ENCODE measurements at regions of chr20 and their contacts with region 1.

Region 1: DNA sequence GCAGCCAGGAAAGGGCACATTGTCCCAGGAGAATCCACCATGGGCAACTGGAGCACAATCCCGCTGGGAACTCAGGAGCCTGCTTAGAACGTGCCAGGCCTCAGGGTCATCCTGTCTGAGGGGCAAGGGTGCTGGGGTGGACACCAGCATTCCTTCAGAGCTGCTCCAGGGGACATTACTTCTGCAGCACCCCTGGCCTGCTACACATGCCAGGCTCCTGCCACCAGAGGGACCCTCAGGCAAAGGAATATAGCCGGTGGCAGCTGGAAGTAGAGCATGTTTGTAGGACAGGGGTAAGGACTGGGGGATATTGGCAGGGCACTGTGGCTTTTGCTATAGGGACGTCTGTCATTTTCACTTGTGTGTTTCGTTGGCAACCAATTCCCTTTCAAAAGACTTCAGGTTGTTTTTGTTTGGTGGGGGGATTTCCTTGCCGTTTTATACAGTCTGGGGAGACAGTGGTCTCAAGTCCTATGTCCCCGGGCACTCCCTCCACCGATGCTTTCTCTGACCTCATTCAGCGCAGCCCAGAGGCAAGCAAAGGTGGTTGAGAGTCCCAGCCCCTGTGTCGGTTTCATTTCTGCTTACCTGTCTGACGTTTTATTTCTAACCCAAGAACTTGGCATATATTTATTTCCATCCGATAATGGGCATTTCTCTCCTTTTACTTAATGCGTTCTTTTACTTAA is 130.8 kb downstream of the JPH2 start:
- DNase-seq: peak; percentile 67
- ATAC-seq: peak; percentile 77
- H3K4me3 Mint-ChIP-seq: no peak overlapping the region
- H3K27ac Mint-ChIP-seq: no peak overlapping the region
- H3K4me1 Mint-ChIP-seq: peaks cover 14% of the 10 kb centered on the region
- H3K27me3 Mint-ChIP-seq: peaks cover 17% of the 10 kb centered on the region

Region 2: GRCh38 chr20:44069203-44070011 is 13.3 kb after region 1 on chr20:
- CTCF ChIA-PET with region 1: interaction called, 16 read pairs
- POLR2A ChIA-PET with region 1: no interaction called
- DNase-seq: peak; percentile 88
- ATAC-seq: peak; percentile 63
- H3K4me3 Mint-ChIP-seq: peak overlapping the region; percentile 72
- H3K27ac Mint-ChIP-seq: peak overlapping the region; percentile 93
- H3K4me1 Mint-ChIP-seq: peaks cover 74% of the 10 kb centered on the region
- H3K27me3 Mint-ChIP-seq: peaks cover 17% of the 10 kb centered on the region